Activated T-helper 1 cell treated with anti-CD3 and anti-CD28 coated beads, Interleukin-12 subunit alpha, Interleukin-12 subunit beta, Interleukin-2, Interleukin-4 antibody, amounts not matched to agents 30 ng/mL and 10 ng/mL and 1 ng/mL, durations not matched to agents 14 hours and 24 hours and 36 hours (primary cell): ENCODE measurements at regions of chr19 and their contacts with region 1.

Region 1: GRCh38 chr19:15149737-15150136 is 42.5 kb downstream of the SYDE1 start:
- DNase-seq: no peak
- H3K4me3 Mint-ChIP-seq: no peak overlapping the region
- H3K27ac Mint-ChIP-seq: no peak overlapping the region
- H3K4me1 Mint-ChIP-seq: no peaks in the 10 kb centered on the region
- H3K27me3 Mint-ChIP-seq: peaks cover 2% of the 10 kb centered on the region

Region 2: GRCh38 chr19:15091901-15092753 is 57.6 kb before region 1 on chr19:
- intact Hi-C with region 1: loop called (anchors 1 kb)
- DNase-seq: peak; percentile 49
- H3K4me3 Mint-ChIP-seq: no peak overlapping the region
- H3K27ac Mint-ChIP-seq: no peak overlapping the region
- H3K4me1 Mint-ChIP-seq: peaks cover 5% of the 10 kb centered on the region
- H3K27me3 Mint-ChIP-seq: peaks cover 8% of the 10 kb centered on the region

Region 3: GRCh38 chr19:15101479-15102082 is 48.2 kb before region 1 on chr19:
- intact Hi-C with region 1: loop called (anchors 1 kb)
- DNase-seq: peak; percentile 29
- H3K4me3 Mint-ChIP-seq: no peak overlapping the region
- H3K27ac Mint-ChIP-seq: no peak overlapping the region
- H3K4me1 Mint-ChIP-seq: no peaks in the 10 kb centered on the region
- H3K27me3 Mint-ChIP-seq: peaks cover 14% of the 10 kb centered on the region

Region 4: DNA sequence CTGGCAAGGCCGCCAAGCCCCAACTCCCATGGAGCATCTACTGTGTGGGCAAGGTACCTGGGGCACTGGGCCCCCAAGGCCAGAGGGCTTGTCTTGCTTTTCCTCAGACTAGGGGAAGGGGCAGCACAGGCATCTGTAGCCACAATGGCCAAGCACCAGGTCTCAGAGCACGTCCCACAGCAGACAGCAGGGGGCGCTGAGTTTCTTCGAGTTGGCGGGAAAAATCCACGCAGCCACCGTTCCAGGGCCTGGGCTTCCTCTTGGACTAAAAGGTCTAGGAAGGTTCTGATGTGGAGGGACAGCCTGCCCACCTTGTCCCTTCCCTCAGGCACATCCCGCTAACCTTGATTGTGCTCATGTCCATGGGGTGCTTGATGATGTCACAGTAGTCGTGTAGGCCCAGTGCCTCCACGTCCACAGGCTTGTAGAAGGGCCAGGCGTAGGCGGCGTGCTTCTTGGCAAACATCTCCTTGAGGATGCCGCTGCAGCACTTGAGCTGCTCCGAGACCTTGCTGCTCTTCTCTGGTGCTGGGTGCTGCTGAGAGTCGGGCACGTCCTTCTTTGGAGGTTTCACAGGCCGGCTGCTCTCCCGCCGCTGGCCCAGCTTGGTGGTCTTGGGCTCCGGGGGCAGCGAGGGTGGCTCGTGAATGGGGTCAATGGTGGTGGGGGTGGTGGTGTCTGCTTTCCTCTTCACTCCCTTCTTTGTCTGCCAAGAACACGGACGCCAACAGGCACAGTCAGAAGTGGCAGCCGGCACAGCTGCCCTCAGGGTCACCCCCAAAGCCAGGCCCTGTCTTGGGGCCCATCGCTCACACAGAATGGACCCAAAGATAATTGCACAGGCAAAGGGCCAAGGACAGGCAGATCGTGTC is 114.6 kb after region 1 on chr19:
- intact Hi-C with region 1: no loop called
- DNase-seq: peak; percentile 42
- H3K4me3 Mint-ChIP-seq: no peak overlapping the region
- H3K27ac Mint-ChIP-seq: no peak overlapping the region
- H3K4me1 Mint-ChIP-seq: peaks cover 14% of the 10 kb centered on the region
- H3K27me3 Mint-ChIP-seq: no peaks in the 10 kb centered on the region